ENCODE measurements at regions of chr2 and their contacts with region 1.

Region 1: GRCh38 chr2:210730672-210731071 is 174.3 kb downstream of the CPS1 start:
- DNase-seq: no peak
- ATAC-seq: no peak

Region 2: DNA sequence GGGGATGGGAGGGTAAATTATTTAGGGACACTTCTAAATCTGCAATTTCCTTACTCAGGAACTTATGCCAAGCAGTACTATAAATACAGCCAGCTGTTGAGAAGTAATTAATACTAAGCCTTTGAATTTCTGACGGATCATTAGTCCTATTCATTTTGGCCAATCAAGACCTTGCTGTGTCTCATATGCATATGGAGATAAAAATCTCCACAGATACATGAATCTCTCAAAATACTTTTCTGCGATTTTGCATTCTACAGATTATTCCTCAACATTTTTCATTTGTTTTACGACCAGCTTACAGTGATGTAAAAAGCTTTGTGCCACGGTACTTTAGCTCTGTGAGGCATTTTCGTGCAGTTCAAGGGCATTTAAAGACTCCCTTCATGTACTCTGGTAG is 270.8 kb before region 1 on chr2:
- intact Hi-C with region 1: loop called (anchors 5 kb)
- DNase-seq: no peak
- ATAC-seq: no peak